ENCODE measurements at regions of chr20 and their contacts with region 1.

Region 1: GRCh38 chr20:9609887-9610502 is 95.6 kb downstream of the LAMP5 start:
- DNase-seq: peak; percentile 69 to 85
- H3K4me3 ChIP-seq: no peak overlapping the region
- H3K27ac ChIP-seq: no peak overlapping the region
- H3K4me1 ChIP-seq: no peaks in the 10 kb centered on the region
- H3K27me3 ChIP-seq: no peaks in the 10 kb centered on the region
- CTCF ChIP-seq: peak in 5 of 7 experiments; percentile 9 to 62 (median 60)
- EP300 ChIP-seq: no peak
- POLR2A ChIP-seq: no peak

Region 2: DNA sequence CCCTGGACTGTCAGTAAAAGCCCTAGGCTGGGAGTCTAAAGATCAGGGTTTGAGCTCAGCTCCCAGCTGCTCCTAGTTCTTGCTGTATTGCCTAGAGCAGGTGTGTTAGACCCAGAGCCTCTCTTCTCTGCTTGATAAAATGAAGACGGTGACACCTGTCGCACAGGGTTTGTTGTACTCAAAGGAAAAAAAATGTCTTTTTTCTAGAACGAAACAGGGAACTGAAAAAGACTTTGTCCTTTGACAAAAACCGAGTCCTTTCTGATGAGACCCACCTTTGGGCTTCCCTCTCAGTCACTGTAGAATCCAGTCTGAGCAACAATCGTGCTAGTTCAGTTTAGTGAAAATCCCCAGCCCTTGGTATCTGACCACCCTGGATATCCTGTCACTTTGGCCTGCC is 197.7 kb before region 1 on chr20:
- intact Hi-C with region 1: loop called (anchors 5 kb)
- DNase-seq: no peak
- H3K4me3 ChIP-seq: no peak overlapping the region
- H3K27ac ChIP-seq: no peak overlapping the region
- H3K4me1 ChIP-seq: no peaks in the 10 kb centered on the region
- H3K27me3 ChIP-seq: no peaks in the 10 kb centered on the region
- CTCF ChIP-seq: no peak
- EP300 ChIP-seq: no peak
- POLR2A ChIP-seq: no peak

Region 3: DNA sequence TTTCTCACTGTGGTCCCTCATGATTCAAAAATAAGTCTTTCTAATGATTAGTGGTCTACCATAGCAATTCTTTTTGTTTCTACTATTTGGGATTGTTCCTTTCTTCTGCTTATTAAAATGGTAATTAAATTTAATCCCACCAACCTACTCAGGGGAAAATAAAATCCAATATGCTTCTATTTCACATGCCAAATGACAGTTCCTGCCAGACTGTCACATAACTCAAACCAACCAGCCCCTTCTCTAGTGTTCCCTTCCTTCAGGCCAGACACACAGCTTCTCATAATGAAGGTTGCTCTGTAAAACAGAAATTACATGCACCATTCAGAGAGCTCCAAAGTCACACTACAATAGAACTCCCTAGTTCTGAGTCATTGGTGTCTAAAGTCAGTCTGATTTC is 205.6 kb after region 1 on chr20:
- intact Hi-C with region 1: no loop called
- DNase-seq: no peak
- H3K4me3 ChIP-seq: no peak overlapping the region
- H3K27ac ChIP-seq: no peak overlapping the region
- H3K4me1 ChIP-seq: no peaks in the 10 kb centered on the region
- H3K27me3 ChIP-seq: no peaks in the 10 kb centered on the region
- CTCF ChIP-seq: no peak
- EP300 ChIP-seq: no peak
- POLR2A ChIP-seq: no peak